T-cell (primary cell): ENCODE measurements at regions of chr2 and their contacts with region 1.

Region 1: DNA sequence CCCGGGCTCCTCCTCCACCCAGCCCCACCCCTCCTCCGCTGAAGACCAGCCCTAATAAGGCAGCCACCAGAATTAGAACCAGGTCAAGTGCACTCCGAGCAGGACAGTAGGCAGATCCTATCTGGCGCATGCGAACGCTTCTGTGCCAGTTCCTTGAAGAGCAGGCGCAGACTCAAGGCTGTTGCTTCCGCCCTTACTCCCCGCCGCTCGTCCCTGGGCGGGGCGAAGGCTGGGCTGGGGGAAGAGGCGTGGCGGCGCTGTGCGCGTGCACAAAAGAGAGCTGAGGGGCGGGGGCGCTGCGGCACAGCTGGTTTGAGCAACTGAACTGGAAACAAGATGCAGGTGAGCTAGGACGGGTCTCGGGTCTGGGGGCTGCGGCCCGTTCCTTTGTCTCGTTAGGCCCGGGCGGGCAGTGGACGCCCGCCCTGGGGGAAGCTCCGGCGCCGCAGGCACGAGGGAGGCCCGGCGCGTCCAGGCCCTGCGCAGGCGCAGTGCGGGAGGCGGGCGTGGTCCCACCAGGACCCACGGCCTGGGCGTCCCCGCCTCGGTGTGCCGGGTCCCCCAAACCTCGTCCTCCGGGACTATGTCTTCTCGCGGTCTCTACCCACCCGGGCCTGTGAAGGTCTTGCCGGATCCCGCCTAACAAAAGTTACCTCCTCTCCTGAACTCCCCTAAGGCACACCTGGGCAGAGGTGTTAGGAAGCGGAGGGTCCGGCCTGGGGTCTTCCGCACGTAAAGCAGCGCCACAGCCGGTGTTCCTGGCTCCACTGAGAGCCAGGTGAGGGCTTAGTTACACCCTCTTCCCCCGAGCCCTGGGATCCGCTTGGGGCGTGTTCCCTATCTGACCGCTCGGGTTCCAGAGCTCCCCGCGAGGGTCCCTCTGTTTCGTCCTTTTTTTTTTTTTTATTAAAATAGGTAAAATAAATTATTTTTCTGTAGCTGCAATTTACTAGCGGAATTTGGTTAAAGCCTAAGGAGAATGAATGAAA is at the start of gene PDCL3:
- DNase-seq: peak; percentile 90 to 97 (median 93)
- ATAC-seq: peak; percentile 90 to 92 (median 91)
- H3K4me3 ChIP-seq: peak within 1 kb of the TSS; percentile 63 to 88
- H3K4me3 Mint-ChIP-seq: peak within 1 kb of the TSS; percentile 92
- H3K27ac ChIP-seq: peak within 1 kb of the TSS; percentile 67
- H3K27ac Mint-ChIP-seq: peak within 1 kb of the TSS; percentile 98 to 99
- H3K4me1 ChIP-seq: peaks cover 8 to 33% of the 10 kb centered on the region in 2 experiments
- H3K4me1 Mint-ChIP-seq: peaks cover 47 to 59% (median 54%) of the 10 kb centered on the region in 3 donors
- H3K27me3 ChIP-seq: no peaks in the 10 kb centered on the region
- H3K27me3 Mint-ChIP-seq: no peaks in the 10 kb centered on the region
- total RNA-seq, gene PDCL3: 17.2 to 21.9 (median 18.6) TPM

Region 2: GRCh38 chr2:99154643-99155536 is 1408.1 kb before region 1 on chr2 and contains the starts of genes LIPT1 and TSGA10:
- CTCF ChIA-PET with region 1: no interaction called
- POLR2A ChIA-PET with region 1: interaction called in 1 of 2 experiments, 10 read pairs
- DNase-seq: peak; percentile 80 to 96 (median 89)
- ATAC-seq: peak; percentile 96 to 99 (median 97)
- H3K4me3 ChIP-seq: peak within 1 kb of the TSS; percentile 80 to 95
- H3K4me3 Mint-ChIP-seq: no peak within 1 kb of the TSS
- H3K27ac ChIP-seq: peak within 1 kb of the TSS; percentile 94
- H3K27ac Mint-ChIP-seq: peak within 1 kb of the TSS; percentile 89 to 91
- H3K4me1 ChIP-seq: peaks cover 11 to 19% of the 10 kb centered on the region in 2 experiments
- H3K4me1 Mint-ChIP-seq: peaks cover 37 to 44% (median 39%) of the 10 kb centered on the region in 3 donors
- H3K27me3 ChIP-seq: no peaks in the 10 kb centered on the region
- H3K27me3 Mint-ChIP-seq: no peaks in the 10 kb centered on the region
- total RNA-seq, gene LIPT1: 12.4 to 17.6 (median 13.7) TPM
- total RNA-seq, gene TSGA10: 14.0 to 16.2 (median 15.8) TPM

Region 3: DNA sequence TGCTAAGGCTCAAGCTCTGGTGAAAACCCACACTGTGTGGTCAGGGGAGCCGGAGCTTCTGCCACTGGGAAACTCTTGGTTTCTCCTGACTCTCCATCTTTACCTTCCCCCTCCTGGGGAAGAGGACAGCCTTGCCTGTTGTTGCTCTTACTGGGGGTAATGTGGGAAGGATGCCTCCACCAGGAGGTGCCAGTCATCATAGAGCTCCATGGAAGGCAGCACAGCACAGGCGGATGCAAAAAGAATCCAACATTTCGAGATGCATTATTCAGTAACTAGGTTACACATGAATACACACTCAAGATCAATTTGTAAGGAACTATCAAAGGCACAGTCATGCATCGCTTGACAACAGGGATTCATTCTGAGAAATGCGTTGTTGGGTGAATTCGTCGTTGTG is 743.3 kb before region 1 on chr2:
- CTCF ChIA-PET with region 1: no interaction called
- POLR2A ChIA-PET with region 1: no interaction called
- DNase-seq: no peak
- ATAC-seq: no peak
- H3K4me3 ChIP-seq: no peak overlapping the region
- H3K4me3 Mint-ChIP-seq: no peak overlapping the region
- H3K27ac ChIP-seq: no peak overlapping the region
- H3K27ac Mint-ChIP-seq: no peak overlapping the region
- H3K4me1 ChIP-seq: no peaks in the 10 kb centered on the region
- H3K4me1 Mint-ChIP-seq: no peaks in the 10 kb centered on the region
- H3K27me3 ChIP-seq: peaks cover 0 to 3% of the 10 kb centered on the region in 2 experiments
- H3K27me3 Mint-ChIP-seq: no peaks in the 10 kb centered on the region

Region 4: GRCh38 chr2:100580367-100581276 is 17.6 kb after region 1 on chr2:
- CTCF ChIA-PET with region 1: interaction called, 4 to 13 read pairs
- POLR2A ChIA-PET with region 1: interaction called, 3 to 16 read pairs
- DNase-seq: peak; percentile 31 to 84 (median 62)
- ATAC-seq: peak; percentile 86 to 90 (median 88)
- H3K4me3 ChIP-seq: peak overlapping the region in 1 of 2 donors; percentile 7
- H3K4me3 Mint-ChIP-seq: peak overlapping the region; percentile 49 to 66 (median 52)
- H3K27ac ChIP-seq: peak overlapping the region; percentile 92
- H3K27ac Mint-ChIP-seq: peak overlapping the region; percentile 98 to 99
- H3K4me1 ChIP-seq: peaks cover 14 to 41% of the 10 kb centered on the region in 2 experiments
- H3K4me1 Mint-ChIP-seq: peaks cover 33 to 47% (median 44%) of the 10 kb centered on the region in 3 donors
- H3K27me3 ChIP-seq: no peaks in the 10 kb centered on the region
- H3K27me3 Mint-ChIP-seq: no peaks in the 10 kb centered on the region

Region 5: GRCh38 chr2:101001691-101002561 is 438.9 kb after region 1 on chr2 and contains the start of gene RPL31:
- CTCF ChIA-PET with region 1: interaction called in 1 of 2 experiments, 5 read pairs
- POLR2A ChIA-PET with region 1: interaction called in 1 of 2 experiments, 13 read pairs
- DNase-seq: peak; percentile 81 to 98 (median 96)
- ATAC-seq: peak; percentile 94 to 96 (median 95)
- H3K4me3 ChIP-seq: peak within 1 kb of the TSS; percentile 96 to 98
- H3K4me3 Mint-ChIP-seq: peak within 1 kb of the TSS; percentile 88 to 96 (median 95)
- H3K27ac ChIP-seq: peak within 1 kb of the TSS; percentile 87
- H3K27ac Mint-ChIP-seq: peak within 1 kb of the TSS; percentile 96 to 97
- H3K4me1 ChIP-seq: peaks cover 10 to 31% of the 10 kb centered on the region in 2 experiments
- H3K4me1 Mint-ChIP-seq: peaks cover 46 to 49% (median 46%) of the 10 kb centered on the region in 3 donors
- H3K27me3 ChIP-seq: no peaks in the 10 kb centered on the region
- H3K27me3 Mint-ChIP-seq: no peaks in the 10 kb centered on the region
- total RNA-seq, gene RPL31: 1,802 to 2,371 (median 2,279) TPM